HepG2 (cell line): ENCODE measurements at regions of chr19 and their contacts with region 1.

Region 1: GRCh38 chr19:41310033-41310758 is at the start of gene CCDC97:
- DNase-seq: peak; percentile 75
- ATAC-seq: peak; percentile 69
- H3K4me3 ChIP-seq: peak within 1 kb of the TSS; percentile 72 to 90 (median 85)
- H3K27ac ChIP-seq: peak within 1 kb of the TSS; percentile 91
- H3K4me1 ChIP-seq: peaks cover 28% of the 10 kb centered on the region
- H3K27me3 ChIP-seq: no peaks in the 10 kb centered on the region
- CTCF ChIP-seq: no peak; the same call in 1 of the 2 replicates
- EP300 ChIP-seq: peak in 1 of 2 experiments; percentile 37; a peak in 1 of 4 replicates
- POLR2A ChIP-seq: peak; percentile 74 to 78
- RAD21 ChIP-seq: peak; percentile 24; the same call in 1 of the 2 replicates
- total RNA-seq, gene CCDC97: 7.1 and 7.3 TPM in 2 replicates

Region 2: DNA sequence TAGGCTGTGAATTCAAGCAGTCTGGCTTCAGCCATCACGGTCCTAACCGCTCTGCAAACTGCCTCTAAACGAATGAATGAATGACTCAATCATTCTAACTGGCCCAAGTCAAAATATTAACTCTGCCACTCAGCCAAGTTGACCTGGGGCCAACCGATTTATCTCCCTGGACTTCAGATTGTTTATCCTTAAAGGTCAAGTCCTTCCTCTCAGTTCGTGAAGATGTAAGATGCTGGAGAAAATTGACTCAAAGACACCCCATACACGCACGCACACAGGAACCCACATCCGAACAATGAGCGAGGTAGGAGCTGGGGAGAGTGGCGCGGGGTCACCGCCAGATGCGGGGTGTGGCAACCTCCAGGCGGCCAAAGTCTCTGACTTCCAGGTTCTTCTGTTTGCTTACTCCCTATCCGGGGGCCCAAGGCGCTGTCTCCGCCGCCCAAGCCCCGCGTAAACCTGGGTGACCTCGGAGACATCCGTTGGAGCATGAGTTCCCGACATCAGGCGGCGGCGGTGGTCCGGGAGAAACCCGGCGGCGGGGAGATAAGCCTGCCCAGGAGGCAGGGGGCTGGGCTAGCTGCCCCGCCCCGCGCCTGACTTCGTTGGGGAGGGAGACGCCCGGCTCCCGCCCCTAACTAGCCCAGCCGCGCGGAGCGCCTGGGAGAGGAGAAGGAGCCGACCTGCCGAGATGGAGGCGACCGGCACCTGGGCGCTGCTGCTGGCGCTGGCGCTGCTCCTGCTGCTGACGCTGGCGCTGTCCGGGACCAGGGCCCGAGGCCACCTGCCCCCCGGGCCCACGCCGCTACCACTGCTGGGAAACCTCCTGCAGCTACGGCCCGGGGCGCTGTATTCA is 117.4 kb before region 1 on chr19 and contains the start of gene CYP2S1:
- CTCF ChIA-PET with region 1: no interaction called
- POLR2A ChIA-PET with region 1: no interaction called
- in situ Hi-C with region 1: no loop called
- intact Hi-C with region 1: no loop called
- DNase-seq: no peak
- ATAC-seq: peak; percentile 84
- H3K4me3 ChIP-seq: peak within 1 kb of the TSS; percentile 58 to 72 (median 58)
- H3K27ac ChIP-seq: no peak within 1 kb of the TSS
- H3K4me1 ChIP-seq: peaks cover 48% of the 10 kb centered on the region
- H3K27me3 ChIP-seq: peaks cover 0 to 24% of the 10 kb centered on the region in 2 experiments; a peak in 2 of 5 replicates
- CTCF ChIP-seq: no peak
- EP300 ChIP-seq: no peak
- POLR2A ChIP-seq: no peak
- RAD21 ChIP-seq: no peak
- total RNA-seq, gene CYP2S1: 0.09 TPM in 1 of 2 replicates, not detected in the other

Region 3: DNA sequence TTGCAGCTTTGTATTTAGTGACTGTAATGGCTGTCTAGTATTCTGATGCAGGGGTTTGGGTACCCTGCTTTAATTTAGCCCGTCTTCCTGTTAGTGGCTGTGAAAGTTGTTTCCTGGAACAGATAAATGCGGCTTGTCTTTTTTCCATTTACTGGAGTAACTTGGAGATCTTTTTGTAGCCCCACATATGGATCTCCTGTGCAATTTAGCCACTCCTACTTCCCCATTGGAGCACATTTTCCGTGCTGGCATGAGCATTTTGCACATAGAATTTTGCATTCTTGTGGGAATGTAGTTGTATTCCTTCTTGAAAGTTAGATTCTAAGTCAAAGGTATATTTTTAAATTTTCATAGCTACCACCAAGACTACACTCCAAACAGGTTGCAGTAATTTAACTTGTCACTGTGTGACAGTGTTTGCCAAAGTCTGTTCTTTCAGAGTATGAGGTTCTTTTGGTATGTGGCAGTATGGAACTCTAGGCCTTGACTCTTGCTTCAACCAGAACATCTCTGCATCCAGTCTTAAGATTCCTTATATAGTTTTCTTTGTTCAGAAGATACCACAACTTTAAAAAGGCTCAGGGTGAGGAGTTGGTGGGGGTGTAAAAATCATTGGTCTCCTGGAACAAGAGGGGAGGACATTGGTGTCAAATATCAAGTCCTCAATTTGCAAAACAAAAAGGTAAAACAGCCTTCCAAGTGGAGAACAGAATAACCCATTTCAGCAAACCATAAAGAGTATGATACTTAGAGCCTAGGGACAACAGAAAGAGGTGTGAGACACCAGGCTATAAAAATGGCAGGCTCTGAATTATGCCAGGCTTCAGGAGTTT is 21.3 kb before region 1 on chr19:
- CTCF ChIA-PET with region 1: no interaction called
- POLR2A ChIA-PET with region 1: no interaction called
- in situ Hi-C with region 1: no loop called
- intact Hi-C with region 1: no loop called
- DNase-seq: no peak
- ATAC-seq: no peak
- H3K4me3 ChIP-seq: no peak overlapping the region
- H3K27ac ChIP-seq: no peak overlapping the region
- H3K4me1 ChIP-seq: peaks cover 14% of the 10 kb centered on the region; the same call in 1 of the 2 replicates
- H3K27me3 ChIP-seq: no peaks in the 10 kb centered on the region
- CTCF ChIP-seq: no peak
- EP300 ChIP-seq: no peak
- POLR2A ChIP-seq: no peak
- RAD21 ChIP-seq: no peak

Region 4: DNA sequence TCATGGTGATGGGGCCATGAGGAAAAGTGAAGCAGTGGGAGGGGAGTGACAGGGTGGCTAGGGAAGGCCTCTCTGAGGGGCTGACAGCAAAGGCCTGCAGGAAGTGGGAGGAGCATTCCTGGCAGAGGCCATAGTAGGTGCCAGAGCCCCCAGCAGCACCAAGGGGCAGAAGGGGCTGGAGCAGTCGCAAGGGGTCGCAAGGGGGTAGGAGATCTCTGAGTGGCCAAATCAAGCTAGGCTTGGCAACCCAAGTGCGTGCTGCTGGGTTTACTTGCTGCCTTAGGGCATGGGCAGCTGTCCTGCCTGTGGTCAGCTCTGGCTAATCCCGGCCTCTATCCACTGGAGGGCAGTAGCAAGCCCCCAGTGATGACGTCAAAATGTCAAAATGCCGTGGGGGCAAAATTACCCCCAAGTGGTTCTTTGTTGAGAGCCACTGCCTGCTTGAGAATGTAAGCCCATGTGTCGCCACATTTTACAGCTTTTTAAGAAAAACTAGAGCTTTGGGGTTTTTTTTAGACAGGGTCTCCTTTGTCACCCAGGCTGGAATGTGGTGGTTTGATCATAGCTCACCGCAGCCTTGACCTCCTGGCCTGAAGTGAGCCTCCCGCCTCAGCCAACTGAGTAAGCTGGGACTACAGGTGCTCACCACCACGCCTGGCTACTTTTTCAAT is 11.5 kb after region 1 on chr19:
- CTCF ChIA-PET with region 1: no interaction called
- POLR2A ChIA-PET with region 1: interaction called, 55 read pairs
- in situ Hi-C with region 1: no loop called
- intact Hi-C with region 1: no loop called
- DNase-seq: peak; percentile 82
- ATAC-seq: peak; percentile 33
- H3K4me3 ChIP-seq: no peak overlapping the region
- H3K27ac ChIP-seq: peak overlapping the region; percentile 74
- H3K4me1 ChIP-seq: peaks cover 71% of the 10 kb centered on the region
- H3K27me3 ChIP-seq: no peaks in the 10 kb centered on the region
- CTCF ChIP-seq: peak; percentile 80
- EP300 ChIP-seq: peak; percentile 56 to 63; a peak in 3 of 4 replicates
- POLR2A ChIP-seq: no peak
- RAD21 ChIP-seq: peak; percentile 63; the same call in 1 of the 2 replicates

Region 5: GRCh38 chr19:41575998-41576397 is 265.8 kb after region 1 on chr19 and contains the start of gene CEACAM21:
- CTCF ChIA-PET with region 1: no interaction called
- POLR2A ChIA-PET with region 1: no interaction called
- in situ Hi-C with region 1: no loop called
- intact Hi-C with region 1: no loop called
- DNase-seq: no peak
- ATAC-seq: no peak
- H3K4me3 ChIP-seq: no peak within 1 kb of the TSS
- H3K27ac ChIP-seq: no peak within 1 kb of the TSS
- H3K4me1 ChIP-seq: peaks cover 9% of the 10 kb centered on the region; the same call in 1 of the 2 replicates
- H3K27me3 ChIP-seq: 0 out of 5 replicates have a peak, but pooled peaks cover 0 to 4% of the 10 kb centered on the region in 2 experiments
- CTCF ChIP-seq: no peak
- EP300 ChIP-seq: no peak
- POLR2A ChIP-seq: no peak
- RAD21 ChIP-seq: no peak
- total RNA-seq, gene CEACAM21: not detected in 2 replicates